ENCODE measurements at regions of chr15 and their contacts with region 1.

Region 1: GRCh38 chr15:83248151-83249029 is 36.1 kb downstream of the BNC1 start:
- DNase-seq: peak in 2 of 10 donors; percentile 26 to 83

Region 2: GRCh38 chr15:82919231-82919886 is 329.0 kb before region 1 on chr15:
- intact Hi-C with region 1: no loop called
- DNase-seq: no peak

Region 3: GRCh38 chr15:83262594-83263315 is 14.4 kb after region 1 on chr15:
- intact Hi-C with region 1: no loop called
- DNase-seq: no peak

Region 4: DNA sequence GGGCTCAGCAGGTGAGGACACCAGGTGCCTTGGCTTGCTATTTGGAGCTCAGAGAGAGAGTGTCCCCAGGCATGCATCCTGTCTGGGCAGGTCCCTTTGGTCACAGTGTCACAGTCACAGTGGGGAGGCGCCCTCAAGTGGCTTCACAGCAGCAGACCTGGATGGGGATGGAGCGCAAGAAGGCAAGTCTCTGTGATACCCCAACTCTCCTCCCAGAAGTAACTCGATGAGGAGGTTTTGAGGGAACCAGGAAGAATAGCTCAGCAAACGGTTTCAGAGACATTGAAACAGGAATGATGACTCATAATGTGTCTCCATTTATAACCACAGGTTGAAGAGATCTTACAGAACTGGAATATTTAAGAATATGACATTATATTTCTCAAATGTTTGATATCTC is 132.3 kb after region 1 on chr15:
- intact Hi-C with region 1: loop called (anchors 2 kb)
- DNase-seq: peak in 7 of 10 donors; percentile 34 to 93 (median 59)

Region 5: DNA sequence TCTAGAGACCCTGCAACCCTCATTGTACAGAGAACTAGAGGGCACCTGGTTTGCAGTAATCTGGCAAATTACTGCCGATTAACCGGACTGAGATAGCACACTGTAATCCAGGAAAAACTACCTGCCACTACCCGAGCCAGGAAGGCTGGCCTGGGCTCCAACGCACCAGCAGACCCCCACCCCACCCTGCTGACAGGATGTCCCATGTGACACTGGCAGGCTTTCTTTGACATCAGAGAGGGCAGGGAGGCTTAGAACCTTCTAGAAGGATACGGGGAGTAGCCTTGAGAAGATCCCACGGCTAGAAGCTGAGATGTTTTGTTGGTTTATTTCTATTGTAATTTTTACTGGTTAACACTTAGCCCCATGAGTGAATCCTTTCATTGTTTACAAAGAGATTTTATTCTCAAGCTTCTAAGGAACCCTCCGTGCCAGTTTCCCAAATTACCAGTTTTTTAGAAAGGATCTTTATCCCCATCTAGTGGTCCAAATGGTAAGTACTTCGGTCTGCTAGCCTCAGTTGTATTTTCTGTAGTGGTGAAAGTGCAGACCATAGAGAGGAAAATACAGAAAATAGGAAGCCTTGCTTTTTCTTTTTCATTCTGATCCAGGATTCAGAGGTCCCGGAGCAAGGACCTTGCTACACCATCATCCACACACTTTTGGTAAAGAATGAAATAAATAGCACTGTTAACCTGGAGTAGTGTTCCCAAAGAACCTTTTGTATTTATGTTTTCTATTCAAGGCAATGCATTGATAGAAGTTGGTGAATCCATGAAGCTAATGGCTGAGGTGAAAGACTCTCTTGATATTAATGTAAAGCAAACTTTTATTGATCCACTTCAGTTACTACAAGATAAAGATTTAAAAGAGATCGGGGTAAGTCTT is 323.7 kb after region 1 on chr15:
- intact Hi-C with region 1: loop called (anchors 2 kb)
- DNase-seq: no peak

Region 6: DNA sequence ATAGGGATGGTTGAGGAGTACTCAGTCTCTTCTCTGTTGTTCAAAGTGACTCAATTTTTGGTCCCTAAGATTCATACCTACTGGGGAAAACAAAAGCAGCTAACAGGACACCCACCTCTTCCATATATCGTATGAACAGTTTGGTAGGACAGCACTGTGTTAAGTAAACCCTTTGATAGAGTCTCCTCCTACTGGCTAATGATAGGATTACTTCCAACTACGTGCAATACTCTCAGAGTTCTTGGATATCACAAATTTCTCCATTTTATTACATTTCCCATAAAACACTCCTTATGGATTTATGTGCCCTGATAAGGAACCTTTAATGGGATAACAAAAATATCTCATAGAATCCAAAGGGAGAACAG is 787.0 kb after region 1 on chr15:
- intact Hi-C with region 1: loop called (anchors 10 kb)
- DNase-seq: no peak